ENCODE measurements at regions of chr11 and their contacts with region 1.

Region 1: GRCh38 chr11:21026685-21027084 is 357.3 kb downstream of the NELL1 start:
- DNase-seq: no peak
- ATAC-seq: no peak
- H3K4me3 ChIP-seq: no peak overlapping the region
- H3K27ac ChIP-seq: no peak overlapping the region
- H3K4me1 ChIP-seq: no peaks in the 10 kb centered on the region
- H3K27me3 ChIP-seq: no peaks in the 10 kb centered on the region
- CTCF ChIP-seq: no peak

Region 2: DNA sequence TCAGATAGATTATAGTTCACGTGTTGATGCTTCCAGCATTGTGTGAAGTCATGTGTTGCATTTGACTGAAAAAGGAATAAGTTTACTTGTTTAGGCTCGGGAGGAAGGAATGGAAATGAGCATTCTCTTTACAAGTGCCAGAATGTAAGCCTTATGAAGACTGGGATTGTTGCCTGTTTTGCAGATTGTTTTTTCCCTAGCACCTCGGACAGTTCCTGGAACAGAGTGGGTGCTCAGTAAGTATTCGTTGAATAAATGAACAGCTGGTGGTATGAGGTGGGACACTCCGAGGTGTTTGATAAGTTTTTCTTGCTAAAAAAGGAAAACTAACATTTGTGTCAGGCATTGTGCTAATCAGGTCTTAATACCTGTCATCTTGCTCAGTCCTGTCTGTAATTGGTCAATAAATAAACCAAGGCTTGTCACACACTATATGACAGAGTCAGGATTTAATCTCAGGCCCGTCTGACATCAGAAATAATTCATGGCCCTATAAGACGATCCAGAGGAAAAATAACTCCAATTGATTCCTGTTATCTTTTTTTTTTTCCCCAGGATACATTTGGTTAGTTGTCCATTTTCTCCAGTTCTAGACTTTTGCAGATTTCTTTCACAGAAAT is 52.6 kb before region 1 on chr11:
- intact Hi-C with region 1: loop called in 1 of 10 experiments (anchors 5 kb)
- DNase-seq: no peak
- ATAC-seq: no peak
- H3K4me3 ChIP-seq: no peak overlapping the region
- H3K27ac ChIP-seq: no peak overlapping the region
- H3K4me1 ChIP-seq: no peaks in the 10 kb centered on the region
- H3K27me3 ChIP-seq: no peaks in the 10 kb centered on the region
- CTCF ChIP-seq: no peak